Calu3 (cell line): ENCODE measurements at regions of chr19 and their contacts with region 1.

Region 1: DNA sequence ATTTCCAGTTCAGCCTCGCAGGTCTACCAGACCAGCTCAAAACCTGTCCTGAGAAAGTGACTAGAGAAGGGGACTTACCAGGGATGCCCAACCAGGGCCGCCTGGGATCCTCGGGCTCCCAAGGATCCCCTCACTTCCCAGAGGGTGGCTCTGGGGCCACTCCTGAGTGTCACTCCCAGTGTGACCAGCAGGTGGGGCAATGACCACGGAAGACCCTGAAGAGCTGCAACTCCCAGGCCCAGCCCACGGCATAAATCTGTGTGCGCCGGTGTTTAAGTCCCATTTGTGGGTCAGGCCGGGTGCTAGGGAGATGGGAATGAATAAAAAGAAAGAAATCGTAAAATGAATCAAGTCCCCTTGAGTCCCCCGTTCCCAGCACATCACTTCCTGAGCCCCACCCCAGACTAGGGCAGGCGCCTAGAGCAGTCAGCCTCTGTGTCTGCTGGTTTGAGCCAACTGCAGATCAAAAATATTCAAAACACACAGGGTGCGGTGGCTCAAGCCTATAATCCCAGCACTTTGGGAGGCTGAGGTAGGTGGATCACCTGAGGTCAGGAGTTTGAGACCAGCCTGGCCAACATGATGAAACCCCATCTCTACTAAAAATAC is 10.7 kb downstream of the PTGIR start:
- DNase-seq: peak; percentile 92
- H3K4me3 Mint-ChIP-seq: no peak overlapping the region
- H3K27ac Mint-ChIP-seq: no peak overlapping the region
- H3K4me1 Mint-ChIP-seq: peaks cover 9% of the 10 kb centered on the region
- H3K27me3 Mint-ChIP-seq: peaks cover 18% of the 10 kb centered on the region
- CTCF ChIP-seq: peak; percentile 89

Region 2: GRCh38 chr19:46600384-46601317 is 13.6 kb before region 1 on chr19:
- CTCF ChIA-PET with region 1: interaction called, 21 read pairs
- intact Hi-C with region 1: no loop called
- DNase-seq: peak; percentile 98
- H3K4me3 Mint-ChIP-seq: peak overlapping the region; percentile 98
- H3K27ac Mint-ChIP-seq: peak overlapping the region; percentile 100
- H3K4me1 Mint-ChIP-seq: peaks cover 23% of the 10 kb centered on the region
- H3K27me3 Mint-ChIP-seq: no peaks in the 10 kb centered on the region
- CTCF ChIP-seq: no peak

Region 3: GRCh38 chr19:46640656-46641055 is 26.4 kb after region 1 on chr19:
- CTCF ChIA-PET with region 1: no interaction called
- intact Hi-C with region 1: no loop called
- DNase-seq: no peak
- H3K4me3 Mint-ChIP-seq: peak overlapping the region; percentile 21
- H3K27ac Mint-ChIP-seq: no peak overlapping the region
- H3K4me1 Mint-ChIP-seq: no peaks in the 10 kb centered on the region
- H3K27me3 Mint-ChIP-seq: peaks cover 42% of the 10 kb centered on the region
- CTCF ChIP-seq: no peak